GM12878 (cell line): ENCODE measurements at regions of chr11 and their contacts with region 1.

Region 1: GRCh38 chr11:108497317-108498045 is 703 bp downstream of the POGLUT3 start:
- DNase-seq: peak; percentile 60
- ATAC-seq: peak; percentile 68
- H3K4me3 ChIP-seq: peak overlapping the region; percentile 65
- H3K27ac ChIP-seq: peak overlapping the region; percentile 66
- H3K4me1 ChIP-seq: no peaks in the 10 kb centered on the region
- H3K27me3 ChIP-seq: no peaks in the 10 kb centered on the region
- CTCF ChIP-seq: no peak
- EP300 ChIP-seq: 0 out of 4 replicates have a peak, but pooled peaks of 1 of the 2 experiments have one; percentile 3
- POLR2A ChIP-seq: peak; percentile 83
- RAD21 ChIP-seq: no peak

Region 2: DNA sequence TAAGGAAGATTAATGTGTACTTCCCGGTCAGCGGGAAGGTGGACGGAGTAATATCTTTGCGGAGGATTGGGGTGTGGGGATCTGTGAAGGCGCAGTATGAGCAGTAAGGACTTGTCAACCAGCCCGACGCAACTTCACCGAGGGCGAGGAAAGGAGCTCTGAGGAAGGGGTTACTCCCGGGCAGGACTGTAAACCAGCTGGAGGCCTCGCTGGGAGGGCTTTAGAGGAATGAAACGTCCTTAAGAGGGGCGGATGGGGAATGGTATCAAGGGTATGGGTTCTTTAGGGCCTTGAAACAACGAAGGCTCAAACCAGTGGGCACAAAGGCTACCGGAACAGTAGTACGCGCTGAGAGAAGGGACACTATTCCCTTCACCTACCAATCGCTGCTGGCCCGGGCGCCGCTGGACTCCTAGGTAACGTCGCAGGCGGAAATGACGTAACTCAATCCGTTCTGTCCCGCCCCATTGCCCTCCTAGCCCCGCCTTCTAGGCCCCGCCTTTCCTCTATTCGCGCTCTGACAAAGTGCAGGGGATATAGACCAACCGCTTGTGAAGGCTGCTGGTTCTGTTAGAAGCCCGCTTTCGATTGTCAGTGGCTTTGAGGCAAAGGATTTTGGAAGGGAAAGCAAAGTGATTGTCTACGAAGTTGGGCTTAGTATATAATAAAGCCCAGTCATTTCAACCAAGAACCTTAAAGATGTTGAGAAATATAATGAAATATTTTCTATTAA is 30.2 kb before region 1 on chr11 and contains the start of gene C11orf65:
- CTCF ChIA-PET with region 1: interaction called, 5 read pairs
- POLR2A ChIA-PET with region 1: no interaction called
- RAD21 ChIA-PET with region 1: no interaction called
- SMC1A ChIA-PET with region 1: interaction called, 16 read pairs
- in situ Hi-C with region 1: no loop called
- intact Hi-C with region 1: loop called (anchors 2 kb)
- DNase-seq: peak; percentile 96
- ATAC-seq: peak; percentile 99
- H3K4me3 ChIP-seq: peak within 1 kb of the TSS; percentile 74
- H3K27ac ChIP-seq: peak within 1 kb of the TSS; percentile 93
- H3K4me1 ChIP-seq: no peaks in the 10 kb centered on the region
- H3K27me3 ChIP-seq: no peaks in the 10 kb centered on the region
- CTCF ChIP-seq: no peak
- EP300 ChIP-seq: 0 out of 4 replicates have a peak, but pooled peaks of 1 of the 2 experiments have one; percentile 4
- POLR2A ChIP-seq: peak; percentile 95
- RAD21 ChIP-seq: no peak
- polyA plus RNA-seq, gene C11orf65: 1.4 to 1.5 TPM

Region 3: GRCh38 chr11:108593214-108593922 is 95.9 kb after region 1 on chr11 and contains the start of gene EXPH5:
- CTCF ChIA-PET with region 1: no interaction called
- POLR2A ChIA-PET with region 1: no interaction called
- RAD21 ChIA-PET with region 1: interaction called, 4 read pairs
- SMC1A ChIA-PET with region 1: interaction called, 10 read pairs
- in situ Hi-C with region 1: no loop called
- intact Hi-C with region 1: loop called (anchors 2 kb)
- DNase-seq: peak; percentile 82
- ATAC-seq: peak; percentile 95
- H3K4me3 ChIP-seq: peak within 1 kb of the TSS; percentile 96
- H3K27ac ChIP-seq: peak within 1 kb of the TSS; percentile 67
- H3K4me1 ChIP-seq: no peaks in the 10 kb centered on the region; the same call in 1 of the 2 replicates
- H3K27me3 ChIP-seq: no peaks in the 10 kb centered on the region
- CTCF ChIP-seq: 0 out of 6 replicates have a peak, but pooled peaks of 1 of the 3 experiments have one; percentile 3
- EP300 ChIP-seq: no peak
- POLR2A ChIP-seq: no peak
- RAD21 ChIP-seq: no peak; the same call in 1 of the 2 replicates
- polyA plus RNA-seq, gene EXPH5: 0.69 to 4.8 TPM